ENCODE measurements at regions of chr3 and their contacts with region 1.

Region 1: DNA sequence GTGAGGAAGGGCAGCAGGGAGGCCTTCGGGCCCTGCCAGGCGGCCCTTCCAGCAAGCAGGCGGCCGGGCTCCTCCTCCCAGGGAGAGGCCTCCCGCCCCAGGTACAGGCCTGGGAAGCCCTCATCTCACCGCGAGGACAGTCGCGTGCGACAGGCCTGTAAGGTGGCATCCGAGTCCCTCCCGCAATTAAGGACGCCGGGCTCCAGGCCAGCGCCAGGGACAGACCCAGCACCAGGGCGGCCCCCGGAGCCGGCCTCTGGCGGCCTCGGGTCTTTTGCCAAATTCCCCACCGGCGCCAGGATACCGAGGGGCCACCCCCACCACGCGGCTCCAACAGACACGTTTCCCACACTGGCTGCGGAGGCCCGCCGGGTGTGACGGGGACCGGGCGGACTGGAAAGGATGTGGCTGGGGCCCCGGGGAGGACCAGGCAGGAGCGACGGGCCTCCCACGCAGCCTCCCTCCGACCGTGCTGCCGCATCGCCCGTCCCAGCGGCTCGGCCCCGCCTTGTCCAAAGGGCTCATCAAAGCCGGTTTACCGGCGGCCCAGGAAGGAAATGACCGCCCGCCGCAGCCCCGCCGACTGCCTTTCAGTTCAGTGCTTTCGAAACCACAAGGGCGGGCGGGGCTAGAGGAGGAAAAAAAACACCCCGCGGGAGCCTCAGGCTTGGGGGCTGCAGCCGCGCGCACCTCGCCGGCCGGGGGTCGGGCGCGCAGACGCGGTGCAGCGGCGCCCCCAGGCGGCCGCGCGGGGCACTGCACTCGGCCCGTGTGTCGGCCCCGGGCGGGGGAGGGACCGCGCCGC is 11.3 kb downstream of the XXYLT1 start:
- DNase-seq: peak; percentile 94
- H3K4me3 ChIP-seq: peak overlapping the region; percentile 83
- H3K4me3 Mint-ChIP-seq: peak overlapping the region; percentile 70
- H3K27ac Mint-ChIP-seq: peak overlapping the region; percentile 69
- H3K4me1 ChIP-seq: peaks cover 9% of the 10 kb centered on the region; the same call in 1 of the 2 replicates
- H3K4me1 Mint-ChIP-seq: peaks cover 6% of the 10 kb centered on the region
- H3K27me3 ChIP-seq: no peaks in the 10 kb centered on the region
- H3K27me3 Mint-ChIP-seq: no peaks in the 10 kb centered on the region
- CTCF ChIP-seq: peak; percentile 18 to 73

Region 2: DNA sequence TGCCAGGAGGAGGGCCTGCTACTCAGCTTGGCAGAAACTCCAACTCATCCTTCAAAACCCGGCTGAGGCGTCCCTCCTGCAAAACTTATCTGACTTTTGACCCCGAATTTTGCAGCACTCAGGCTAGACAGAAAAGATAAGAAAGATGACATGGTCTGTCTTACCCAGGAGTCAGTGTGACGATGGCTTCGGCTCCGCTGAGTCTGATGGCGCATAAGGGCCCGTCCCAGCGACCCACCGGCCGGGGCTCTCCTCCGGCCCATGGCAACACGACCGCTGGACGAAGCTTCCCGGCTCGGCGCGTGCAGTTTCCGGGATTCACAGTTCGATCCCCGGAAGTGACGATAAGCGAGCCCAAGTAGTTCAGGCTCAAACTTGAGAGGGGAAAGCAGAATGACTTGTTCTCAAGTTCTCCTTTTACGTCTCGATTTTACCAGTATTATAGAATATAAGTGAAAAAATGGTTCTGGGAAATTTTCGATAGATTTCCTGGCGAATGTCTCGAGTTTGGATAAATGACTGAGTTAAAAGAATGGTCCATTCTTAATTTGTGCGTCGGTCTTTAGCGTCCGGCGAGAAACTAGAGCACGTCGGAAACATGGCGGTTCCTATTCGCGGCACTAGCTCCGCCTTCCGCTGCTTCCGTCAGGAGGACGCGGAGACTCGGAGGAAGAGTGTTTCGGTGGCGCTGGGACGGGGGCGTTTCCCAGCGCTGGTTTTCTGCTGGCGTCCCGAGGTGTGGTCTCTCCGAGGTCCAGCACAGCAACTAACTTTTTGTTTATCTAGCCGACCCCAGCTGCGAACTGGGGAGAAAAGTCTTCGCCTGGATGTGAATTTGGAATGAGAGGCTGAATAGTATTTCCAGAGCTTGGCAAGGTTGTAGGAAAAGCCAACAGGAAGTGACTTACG is 587.5 kb before region 1 on chr3 and contains the start of gene LSG1:
- CTCF ChIA-PET with region 1: interaction called, 4 read pairs
- POLR2A ChIA-PET with region 1: no interaction called
- intact Hi-C with region 1: loop called (anchors 1 kb)
- DNase-seq: peak; percentile 91 to 92
- H3K4me3 ChIP-seq: peak within 1 kb of the TSS; percentile 88
- H3K4me3 Mint-ChIP-seq: peak within 1 kb of the TSS; percentile 83
- H3K27ac Mint-ChIP-seq: peak within 1 kb of the TSS; percentile 97
- H3K4me1 ChIP-seq: peaks cover 9% of the 10 kb centered on the region
- H3K4me1 Mint-ChIP-seq: peaks cover 5% of the 10 kb centered on the region
- H3K27me3 ChIP-seq: no peaks in the 10 kb centered on the region
- H3K27me3 Mint-ChIP-seq: no peaks in the 10 kb centered on the region
- CTCF ChIP-seq: peak in 1 of 2 experiments; percentile 9
- total RNA-seq, gene LSG1: 48.0 and 55.0 TPM in 2 replicates

Region 3: DNA sequence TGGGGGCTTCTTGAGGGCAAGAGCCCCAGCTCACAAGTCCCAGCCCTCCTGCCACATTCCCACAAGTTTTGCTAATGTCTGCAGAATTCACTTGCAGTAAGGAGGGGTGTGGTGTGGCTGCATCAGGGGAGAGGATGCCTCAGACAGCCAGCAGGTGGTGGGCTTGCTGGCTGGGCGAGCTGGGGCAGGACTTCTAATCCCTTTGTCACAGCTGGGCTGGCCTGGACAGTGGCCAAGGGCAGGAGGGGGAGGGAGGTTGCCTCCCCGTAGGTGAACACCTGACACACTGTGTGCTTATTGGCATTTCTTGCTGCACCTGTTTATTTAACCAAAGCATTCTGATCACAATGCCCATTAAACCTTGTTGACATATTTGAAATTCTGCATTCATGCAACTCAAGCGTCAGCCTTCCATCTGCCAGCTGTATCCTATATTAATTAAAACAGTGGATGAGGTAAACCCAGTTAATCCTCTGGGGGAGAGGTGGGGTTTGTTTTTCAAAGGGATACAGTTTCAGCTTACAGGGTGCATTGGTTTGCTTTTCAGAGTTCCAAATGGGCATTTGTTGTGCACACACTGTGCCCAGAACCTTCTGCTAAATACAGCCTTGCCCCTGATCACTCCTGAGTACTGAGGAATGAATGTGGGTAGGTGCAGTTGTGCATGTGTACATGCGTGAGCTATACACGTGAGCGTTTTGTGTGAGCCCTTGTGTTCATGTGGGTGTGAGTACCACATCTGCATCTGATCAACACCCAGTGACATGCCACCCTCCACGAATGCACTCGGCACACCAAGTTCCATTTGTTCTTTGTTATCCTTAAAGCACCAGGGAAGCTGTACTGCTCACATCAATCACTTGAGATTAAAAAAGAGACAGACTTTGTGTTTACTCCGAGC is 257.5 kb before region 1 on chr3:
- CTCF ChIA-PET with region 1: no interaction called
- POLR2A ChIA-PET with region 1: no interaction called
- intact Hi-C with region 1: loop called (anchors 1 kb)
- DNase-seq: peak; percentile 73 to 74
- H3K4me3 ChIP-seq: no peak overlapping the region
- H3K4me3 Mint-ChIP-seq: no peak overlapping the region
- H3K27ac Mint-ChIP-seq: no peak overlapping the region
- H3K4me1 ChIP-seq: peaks cover 6% of the 10 kb centered on the region; the same call in 1 of the 2 replicates
- H3K4me1 Mint-ChIP-seq: no peaks in the 10 kb centered on the region
- H3K27me3 ChIP-seq: no peaks in the 10 kb centered on the region
- H3K27me3 Mint-ChIP-seq: no peaks in the 10 kb centered on the region
- CTCF ChIP-seq: peak; percentile 41 to 85

Region 4: DNA sequence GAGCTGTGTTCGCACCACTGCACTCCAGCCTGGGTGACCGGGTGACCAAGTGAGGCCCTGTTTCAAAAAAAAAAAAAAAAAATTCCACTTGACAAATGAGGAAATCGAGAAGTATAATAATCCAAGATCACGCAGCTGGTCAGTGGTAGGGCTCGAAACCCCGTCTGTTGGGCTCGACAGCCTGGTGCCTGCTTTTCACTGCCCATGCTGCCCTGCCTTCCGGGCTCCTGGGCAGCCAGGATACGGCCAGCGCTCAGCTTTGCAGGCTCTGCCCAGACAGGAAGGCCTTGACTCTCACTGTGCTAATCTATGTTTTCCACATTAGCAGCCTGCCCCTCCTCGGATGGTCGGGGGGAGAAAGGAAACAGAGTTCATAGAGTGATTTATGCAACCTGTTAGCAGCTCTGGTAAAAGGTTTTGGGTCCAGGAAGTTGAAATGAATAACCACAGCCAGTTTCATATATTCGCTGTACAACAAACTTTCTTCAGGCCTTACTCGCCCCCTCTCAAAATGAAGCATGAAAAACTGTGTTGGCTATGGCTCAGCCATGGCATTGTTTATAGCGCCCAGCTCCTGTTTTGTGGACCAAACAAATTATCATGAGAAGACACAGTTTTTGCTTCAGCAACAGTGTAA is 97.5 kb before region 1 on chr3:
- CTCF ChIA-PET with region 1: no interaction called
- POLR2A ChIA-PET with region 1: no interaction called
- intact Hi-C with region 1: loop called (anchors 2 kb)
- DNase-seq: no peak
- H3K4me3 ChIP-seq: no peak overlapping the region
- H3K4me3 Mint-ChIP-seq: no peak overlapping the region
- H3K27ac Mint-ChIP-seq: no peak overlapping the region
- H3K4me1 ChIP-seq: peaks cover 38% of the 10 kb centered on the region
- H3K4me1 Mint-ChIP-seq: peaks cover 48% of the 10 kb centered on the region
- H3K27me3 ChIP-seq: no peaks in the 10 kb centered on the region
- H3K27me3 Mint-ChIP-seq: no peaks in the 10 kb centered on the region
- CTCF ChIP-seq: no peak

Region 5: DNA sequence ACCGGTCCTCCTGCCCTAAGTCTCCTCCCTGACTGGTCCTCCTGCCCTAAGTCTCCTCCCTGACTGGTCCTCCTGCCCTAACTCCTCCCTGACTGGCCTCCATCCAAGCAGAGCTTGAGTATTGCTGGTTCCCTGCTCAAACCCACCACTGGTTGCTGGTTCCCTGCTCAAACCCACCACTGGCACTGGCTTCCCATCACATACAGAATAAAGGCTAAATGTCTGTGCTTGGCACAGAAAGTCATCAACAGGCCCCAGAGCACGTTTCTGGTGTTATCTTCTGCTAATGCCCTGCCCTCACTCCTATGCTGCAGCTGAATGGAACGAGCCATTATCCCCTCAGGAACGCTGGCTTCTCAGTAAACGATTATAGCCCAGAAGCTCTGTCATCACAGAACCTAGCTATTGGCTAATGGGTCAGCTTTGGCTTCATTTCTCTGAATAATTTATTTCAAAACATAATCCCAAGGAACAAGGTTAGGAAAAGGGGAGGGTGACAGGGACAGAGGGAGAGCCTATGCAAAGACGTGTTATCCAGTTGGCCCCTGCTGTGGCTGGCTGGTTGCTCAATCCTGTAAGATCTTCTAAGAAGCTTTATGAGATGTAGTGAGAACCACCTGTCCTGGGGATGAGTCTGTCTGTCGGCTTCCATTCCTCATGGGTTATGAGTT is 454.8 kb after region 1 on chr3:
- CTCF ChIA-PET with region 1: no interaction called
- POLR2A ChIA-PET with region 1: no interaction called
- intact Hi-C with region 1: no loop called
- DNase-seq: no peak
- H3K4me3 ChIP-seq: no peak overlapping the region
- H3K4me3 Mint-ChIP-seq: no peak overlapping the region
- H3K27ac Mint-ChIP-seq: no peak overlapping the region
- H3K4me1 ChIP-seq: peaks cover 27% of the 10 kb centered on the region
- H3K4me1 Mint-ChIP-seq: peaks cover 35% of the 10 kb centered on the region
- H3K27me3 ChIP-seq: no peaks in the 10 kb centered on the region
- H3K27me3 Mint-ChIP-seq: no peaks in the 10 kb centered on the region
- CTCF ChIP-seq: no peak

Region 6: DNA sequence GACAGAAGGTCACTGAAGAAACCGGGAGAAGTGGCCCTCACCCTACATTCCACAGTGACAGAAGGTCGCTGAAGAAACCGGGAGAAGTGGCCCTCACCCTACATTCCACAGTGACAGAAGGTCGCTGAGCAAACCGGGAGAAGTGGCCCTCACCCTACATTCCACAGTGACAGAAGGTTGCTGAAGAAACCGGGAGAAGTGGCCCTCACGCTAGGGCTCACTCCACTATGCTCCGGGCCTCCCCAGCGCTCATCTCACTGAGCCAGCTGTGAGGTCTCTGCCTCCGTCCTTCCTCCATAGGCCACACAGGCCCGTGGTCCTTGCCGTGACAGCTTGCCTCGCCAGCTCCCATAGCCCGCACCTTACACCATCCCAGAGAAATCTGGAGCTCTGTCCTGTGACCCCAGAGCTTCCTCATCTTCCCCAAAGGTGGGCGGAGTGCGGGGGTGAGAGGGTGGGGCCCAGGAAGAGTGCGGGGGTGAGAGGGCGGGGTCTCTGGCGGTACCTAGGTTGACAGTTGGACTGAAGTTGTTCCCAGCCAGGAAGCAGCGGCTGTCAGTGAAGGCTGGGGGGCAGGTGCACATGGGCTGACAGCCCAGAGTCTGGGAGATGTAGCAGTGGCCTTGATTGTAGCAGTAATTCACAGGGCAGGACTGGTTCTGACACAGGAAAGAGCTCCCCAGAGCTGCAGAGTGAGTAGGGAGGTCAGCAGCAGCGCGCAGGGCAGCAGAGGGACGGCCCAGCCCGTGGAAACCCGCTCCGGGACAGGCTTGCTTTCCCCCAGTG is 493.1 kb after region 1 on chr3:
- CTCF ChIA-PET with region 1: no interaction called
- POLR2A ChIA-PET with region 1: interaction called, 12 read pairs
- intact Hi-C with region 1: no loop called
- DNase-seq: no peak
- H3K4me3 ChIP-seq: no peak overlapping the region
- H3K4me3 Mint-ChIP-seq: no peak overlapping the region
- H3K27ac Mint-ChIP-seq: no peak overlapping the region
- H3K4me1 ChIP-seq: peaks cover 12% of the 10 kb centered on the region
- H3K4me1 Mint-ChIP-seq: peaks cover 9% of the 10 kb centered on the region
- H3K27me3 ChIP-seq: no peaks in the 10 kb centered on the region
- H3K27me3 Mint-ChIP-seq: no peaks in the 10 kb centered on the region
- CTCF ChIP-seq: no peak

Measured in Caco-2 (cell line).